ENCODE measurements at regions of chr11 and their contacts with region 1.

Region 1: GRCh38 chr11:26493616-26494015 is 78.4 kb downstream of the MUC15 start:
- DNase-seq: no peak
- ATAC-seq: no peak

Region 2: GRCh38 chr11:26219183-26220117 is 274.2 kb before region 1 on chr11:
- intact Hi-C with region 1: no loop called
- DNase-seq: no peak
- ATAC-seq: no peak

Region 3: DNA sequence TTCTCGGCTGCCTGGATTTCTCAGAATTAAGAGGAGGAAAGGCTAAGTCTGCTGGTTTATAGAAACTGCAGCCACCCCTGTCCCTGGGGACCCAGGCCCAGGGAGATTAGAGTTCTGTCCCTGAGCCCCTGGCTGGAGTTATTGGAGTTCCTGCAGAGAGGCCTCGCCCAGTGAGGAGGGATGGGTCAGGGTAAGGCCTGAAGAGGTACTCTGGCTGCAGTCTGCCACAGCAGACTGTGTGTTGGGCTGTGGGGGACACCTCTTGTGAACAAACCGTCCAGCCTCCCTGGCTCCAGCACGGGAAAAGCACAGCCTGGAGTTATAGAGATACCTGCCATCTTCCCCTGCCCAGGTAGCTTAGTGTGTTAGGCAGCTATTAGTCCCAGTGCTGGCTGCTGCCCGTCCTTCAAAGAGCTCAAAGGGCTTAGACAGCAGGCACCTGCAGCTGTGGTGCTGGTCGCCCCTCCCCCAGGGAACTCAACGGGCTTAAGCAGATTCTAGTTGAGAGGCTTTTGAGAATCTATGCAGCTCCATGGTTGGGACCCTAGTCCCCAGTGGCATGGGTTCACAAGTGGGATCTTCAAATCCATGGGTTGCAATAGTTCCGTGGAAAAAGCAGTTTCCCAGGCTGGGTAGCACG is 115.0 kb after region 1 on chr11:
- intact Hi-C with region 1: no loop called
- DNase-seq: no peak
- ATAC-seq: no peak

Region 4: GRCh38 chr11:26730414-26731080 is 236.9 kb after region 1 on chr11:
- intact Hi-C with region 1: loop called (anchors 10 kb)
- DNase-seq: no peak
- ATAC-seq: no peak